Mucosa of descending colon (tissue), 3 donors: ENCODE measurements at regions of chr6 and their contacts with region 1.

Region 1: GRCh38 chr6:151240036-151240685 is 394 bp downstream of the AKAP12 start:
- DNase-seq: peak; percentile 52 to 75 (median 68)
- ATAC-seq: peak; percentile 73
- H3K4me3 ChIP-seq: peak overlapping the region; percentile 20
- H3K4me1 ChIP-seq: peaks cover 6% of the 10 kb centered on the region
- CTCF ChIP-seq: no peak

Region 2: GRCh38 chr6:151014404-151015100 is 225.6 kb before region 1 on chr6:
- intact Hi-C with region 1: loop called in 1 of 2 experiments (anchors 10 kb)
- DNase-seq: peak; percentile 66 to 77 (median 75)
- ATAC-seq: peak; percentile 97
- H3K4me3 ChIP-seq: no peak overlapping the region
- H3K4me1 ChIP-seq: no peaks in the 10 kb centered on the region
- CTCF ChIP-seq: peak; percentile 97

Region 3: DNA sequence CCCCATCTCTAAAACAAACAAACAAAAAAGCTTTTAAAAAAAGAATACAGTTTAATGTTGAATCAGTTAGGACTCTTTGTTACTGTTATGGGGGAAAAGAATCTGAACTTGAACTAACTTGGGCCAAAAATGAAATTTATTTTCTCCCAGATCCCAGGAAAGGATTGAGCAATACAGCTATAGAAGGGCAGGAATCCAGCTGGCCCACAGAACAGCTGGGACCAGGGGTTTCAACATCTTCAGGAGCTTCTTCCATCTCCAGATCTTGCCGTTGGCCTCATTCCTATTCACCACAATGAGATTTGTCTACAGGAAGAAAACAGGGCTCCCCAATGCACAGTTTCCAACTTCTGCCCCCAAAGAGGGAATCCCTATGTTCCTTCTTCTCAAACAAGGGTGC is 43.6 kb before region 1 on chr6:
- intact Hi-C with region 1: no loop called
- DNase-seq: peak in 1 of 3 donors; percentile 51
- ATAC-seq: no peak
- H3K4me3 ChIP-seq: no peak overlapping the region
- H3K4me1 ChIP-seq: no peaks in the 10 kb centered on the region
- CTCF ChIP-seq: no peak

Region 4: GRCh38 chr6:151365233-151365632 is 125.1 kb after region 1 on chr6:
- intact Hi-C with region 1: no loop called
- DNase-seq: no peak
- ATAC-seq: no peak
- H3K4me3 ChIP-seq: no peak overlapping the region
- H3K4me1 ChIP-seq: no peaks in the 10 kb centered on the region
- CTCF ChIP-seq: no peak